ENCODE measurements at regions of chr15 and their contacts with region 1.

Region 1: GRCh38 chr15:56245871-56246814 is 2.5 kb upstream of the RFX7 start:
- DNase-seq: peak; percentile 94
- H3K4me3 Mint-ChIP-seq: peak overlapping the region; percentile 79
- H3K27ac Mint-ChIP-seq: peak overlapping the region; percentile 90
- H3K4me1 Mint-ChIP-seq: peaks cover 16% of the 10 kb centered on the region
- H3K27me3 Mint-ChIP-seq: no peaks in the 10 kb centered on the region

Region 2: GRCh38 chr15:55407949-55408791 is 838.0 kb before region 1 on chr15 and contains the starts of genes CCPG1 and PIERCE2:
- CTCF ChIA-PET with region 1: no interaction called
- intact Hi-C with region 1: loop called (anchors 5 kb)
- DNase-seq: peak; percentile 90
- H3K4me3 Mint-ChIP-seq: peak within 1 kb of the TSS; percentile 82
- H3K27ac Mint-ChIP-seq: peak within 1 kb of the TSS; percentile 68
- H3K4me1 Mint-ChIP-seq: peaks cover 24% of the 10 kb centered on the region
- H3K27me3 Mint-ChIP-seq: no peaks in the 10 kb centered on the region
- total RNA-seq, gene CCPG1: 9.8 to 11.6 TPM
- total RNA-seq, gene PIERCE2: 0.38 to 0.44 TPM

Region 3: DNA sequence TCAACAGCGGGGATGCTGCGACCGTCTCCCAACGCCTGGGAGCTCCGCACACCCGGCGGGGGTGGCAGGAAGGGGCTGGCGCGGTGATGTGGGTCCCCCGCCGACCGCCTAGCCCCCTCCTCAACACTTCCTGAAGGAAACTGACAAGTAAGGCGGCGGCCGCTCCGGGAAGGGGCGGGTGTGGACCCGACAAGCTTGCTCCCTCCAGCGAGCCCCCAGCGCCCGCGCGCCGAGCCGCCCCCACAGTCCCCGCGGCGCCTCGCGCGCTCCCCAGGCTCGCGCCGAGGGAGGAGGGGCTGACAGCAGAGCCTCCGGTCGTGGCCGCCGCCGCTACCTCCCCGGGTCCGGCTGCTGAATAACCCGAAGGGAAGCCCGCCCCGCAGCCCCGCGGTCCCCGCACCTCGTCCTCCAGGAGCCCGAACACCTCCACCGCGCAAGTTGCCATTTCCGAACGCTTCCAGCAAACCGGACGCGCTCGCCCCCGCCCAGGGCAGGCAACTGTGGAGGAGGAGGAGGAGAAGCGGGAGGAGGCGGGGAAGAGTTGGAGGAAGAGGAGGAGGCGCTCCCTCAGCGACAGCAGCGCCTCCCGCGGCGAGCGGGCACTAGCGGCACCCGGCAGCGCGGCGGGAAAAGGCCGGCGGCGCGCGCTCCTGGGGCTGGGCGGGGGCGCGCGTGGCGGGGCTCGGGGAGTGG is 252.9 kb before region 1 on chr15 and contains the start of gene NEDD4:
- CTCF ChIA-PET with region 1: interaction called, 3 read pairs
- intact Hi-C with region 1: loop called (anchors 1 kb)
- DNase-seq: peak; percentile 85
- H3K4me3 Mint-ChIP-seq: peak within 1 kb of the TSS; percentile 89
- H3K27ac Mint-ChIP-seq: peak within 1 kb of the TSS; percentile 80
- H3K4me1 Mint-ChIP-seq: peaks cover 30% of the 10 kb centered on the region
- H3K27me3 Mint-ChIP-seq: peaks cover 8% of the 10 kb centered on the region
- total RNA-seq, gene NEDD4: 29.1 to 32.2 TPM

Region 4: GRCh38 chr15:56194035-56194434 is 52.1 kb before region 1 on chr15:
- CTCF ChIA-PET with region 1: no interaction called
- intact Hi-C with region 1: no loop called
- DNase-seq: no peak
- H3K4me3 Mint-ChIP-seq: no peak overlapping the region
- H3K27ac Mint-ChIP-seq: no peak overlapping the region
- H3K4me1 Mint-ChIP-seq: peaks cover 31% of the 10 kb centered on the region
- H3K27me3 Mint-ChIP-seq: no peaks in the 10 kb centered on the region

Region 5: DNA sequence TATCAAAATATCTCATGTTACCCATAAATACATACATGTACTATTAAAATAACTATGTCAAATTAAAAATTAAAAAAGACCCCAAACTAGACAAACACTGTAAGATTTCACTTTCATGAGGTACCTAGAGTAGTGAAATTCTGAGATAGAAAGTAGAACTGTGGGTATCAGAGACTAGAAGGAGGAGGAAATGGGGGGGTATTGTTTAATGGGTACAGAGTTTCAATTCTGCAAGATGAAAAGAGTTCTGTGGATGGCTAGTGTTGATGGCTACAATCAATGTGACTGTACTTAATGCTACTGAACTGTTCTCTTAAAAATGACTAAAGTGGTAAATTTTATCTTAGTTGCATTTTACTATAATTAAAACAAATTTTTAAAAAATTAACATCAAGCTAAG is 39.1 kb before region 1 on chr15:
- CTCF ChIA-PET with region 1: interaction called, 3 read pairs
- intact Hi-C with region 1: loop called (anchors 2 kb)
- DNase-seq: no peak
- H3K4me3 Mint-ChIP-seq: no peak overlapping the region
- H3K27ac Mint-ChIP-seq: no peak overlapping the region
- H3K4me1 Mint-ChIP-seq: peaks cover 80% of the 10 kb centered on the region
- H3K27me3 Mint-ChIP-seq: no peaks in the 10 kb centered on the region

Region 6: GRCh38 chr15:56390739-56391267 is 144.7 kb after region 1 on chr15:
- CTCF ChIA-PET with region 1: no interaction called
- intact Hi-C with region 1: no loop called
- DNase-seq: no peak
- H3K4me3 Mint-ChIP-seq: no peak overlapping the region
- H3K27ac Mint-ChIP-seq: no peak overlapping the region
- H3K4me1 Mint-ChIP-seq: peaks cover 3% of the 10 kb centered on the region
- H3K27me3 Mint-ChIP-seq: peaks cover 2% of the 10 kb centered on the region

Region 7: DNA sequence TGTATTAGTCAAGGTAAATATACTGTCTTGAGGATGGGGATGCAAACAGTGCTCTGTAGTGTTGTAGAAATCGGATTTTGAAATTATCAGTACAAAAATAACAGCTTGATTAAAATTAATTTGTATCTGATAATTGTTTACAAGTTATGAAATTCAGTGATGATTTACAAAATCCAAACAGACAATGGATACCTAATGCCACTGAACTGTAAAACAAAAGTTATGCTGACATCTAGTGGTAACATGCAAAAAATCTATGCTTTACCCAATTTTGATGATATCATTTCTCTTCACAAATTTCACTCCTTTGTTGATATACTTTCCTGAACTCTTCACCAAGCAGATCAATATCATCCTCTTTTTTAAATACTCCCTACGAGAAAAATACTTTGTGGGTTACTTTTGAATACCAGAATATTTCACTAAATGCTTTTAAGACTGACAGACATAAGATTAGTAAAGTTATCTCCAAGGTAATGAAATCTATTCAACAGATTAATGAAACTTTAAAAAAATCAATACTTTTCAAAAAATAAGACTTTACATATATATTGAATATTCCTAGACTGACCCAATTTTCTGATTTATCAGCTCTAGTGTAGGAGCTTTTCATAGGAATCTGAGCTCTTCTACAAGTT is 182.8 kb after region 1 on chr15:
- CTCF ChIA-PET with region 1: interaction called, 25 read pairs
- intact Hi-C with region 1: loop called (anchors 1 kb)
- DNase-seq: no peak
- H3K4me3 Mint-ChIP-seq: no peak overlapping the region
- H3K27ac Mint-ChIP-seq: no peak overlapping the region
- H3K4me1 Mint-ChIP-seq: no peaks in the 10 kb centered on the region
- H3K27me3 Mint-ChIP-seq: peaks cover 5% of the 10 kb centered on the region

Region 8: DNA sequence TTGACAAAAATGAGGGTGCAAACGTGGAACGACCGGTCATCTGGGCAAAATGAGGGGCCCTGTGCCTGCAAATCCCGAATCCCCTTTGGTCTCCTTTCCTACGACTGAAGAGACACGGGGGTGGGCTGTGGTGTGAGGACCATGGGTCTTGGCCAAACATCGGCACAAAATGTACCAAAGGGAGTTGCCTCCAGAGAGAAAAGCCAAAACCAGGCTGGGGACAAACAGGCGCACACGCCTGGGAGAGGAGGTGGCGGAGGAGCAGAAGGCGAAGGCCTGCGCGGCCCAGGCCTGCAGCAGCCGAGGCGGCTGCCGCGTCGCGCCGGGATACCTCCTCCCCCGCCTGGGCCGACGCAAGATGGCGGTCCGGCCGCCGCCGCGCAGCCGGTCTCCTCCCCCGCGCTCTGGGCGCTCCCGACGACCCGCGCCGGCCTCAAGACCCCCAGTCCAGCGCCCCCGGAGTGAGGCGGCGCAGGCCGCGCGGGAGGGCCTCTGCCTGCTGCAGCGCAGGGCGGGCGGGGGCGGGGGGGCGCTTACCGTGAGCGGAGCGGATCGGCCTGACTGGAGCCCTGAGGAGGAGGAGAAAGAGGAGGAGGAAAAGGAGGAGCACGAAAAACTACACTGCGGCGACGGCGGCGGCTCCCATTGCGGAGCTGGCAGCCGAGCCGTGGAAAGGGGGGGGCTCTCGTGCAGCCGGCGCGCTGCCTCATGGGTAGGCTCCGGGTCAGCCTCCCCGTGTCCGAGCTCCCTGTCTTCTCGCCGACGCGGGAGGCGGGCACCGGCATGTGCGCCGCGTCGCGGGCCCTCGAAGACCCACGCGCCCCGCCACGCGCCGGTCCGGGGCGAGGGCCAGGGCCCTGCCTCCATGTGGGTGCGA is 487.0 kb after region 1 on chr15 and contains the start of gene ZNF280D:
- CTCF ChIA-PET with region 1: no interaction called
- intact Hi-C with region 1: loop called (anchors 2 kb)
- DNase-seq: peak; percentile 76
- H3K4me3 Mint-ChIP-seq: peak within 1 kb of the TSS; percentile 86
- H3K27ac Mint-ChIP-seq: peak within 1 kb of the TSS; percentile 86
- H3K4me1 Mint-ChIP-seq: peaks cover 31% of the 10 kb centered on the region
- H3K27me3 Mint-ChIP-seq: no peaks in the 10 kb centered on the region
- total RNA-seq, gene ZNF280D: 13.7 to 16.8 TPM

Region 9: GRCh38 chr15:56886932-56887781 is 641.0 kb after region 1 on chr15:
- CTCF ChIA-PET with region 1: no interaction called
- intact Hi-C with region 1: loop called (anchors 5 kb)
- DNase-seq: peak; percentile 84
- H3K4me3 Mint-ChIP-seq: peak overlapping the region; percentile 76
- H3K27ac Mint-ChIP-seq: peak overlapping the region; percentile 78
- H3K4me1 Mint-ChIP-seq: peaks cover 20% of the 10 kb centered on the region
- H3K27me3 Mint-ChIP-seq: no peaks in the 10 kb centered on the region

Region 10: GRCh38 chr15:57012556-57012955 is 766.4 kb after region 1 on chr15:
- CTCF ChIA-PET with region 1: no interaction called
- intact Hi-C with region 1: no loop called
- DNase-seq: no peak
- H3K4me3 Mint-ChIP-seq: no peak overlapping the region
- H3K27ac Mint-ChIP-seq: no peak overlapping the region
- H3K4me1 Mint-ChIP-seq: peaks cover 42% of the 10 kb centered on the region
- H3K27me3 Mint-ChIP-seq: no peaks in the 10 kb centered on the region

Measured in activated naive CD4-positive, alpha-beta T cell treated with anti-CD3 and anti-CD28 coated beads for 36 hours (primary cell).